HCT116 (cell line): ENCODE measurements at regions of chr2 and their contacts with region 1.

Region 1: DNA sequence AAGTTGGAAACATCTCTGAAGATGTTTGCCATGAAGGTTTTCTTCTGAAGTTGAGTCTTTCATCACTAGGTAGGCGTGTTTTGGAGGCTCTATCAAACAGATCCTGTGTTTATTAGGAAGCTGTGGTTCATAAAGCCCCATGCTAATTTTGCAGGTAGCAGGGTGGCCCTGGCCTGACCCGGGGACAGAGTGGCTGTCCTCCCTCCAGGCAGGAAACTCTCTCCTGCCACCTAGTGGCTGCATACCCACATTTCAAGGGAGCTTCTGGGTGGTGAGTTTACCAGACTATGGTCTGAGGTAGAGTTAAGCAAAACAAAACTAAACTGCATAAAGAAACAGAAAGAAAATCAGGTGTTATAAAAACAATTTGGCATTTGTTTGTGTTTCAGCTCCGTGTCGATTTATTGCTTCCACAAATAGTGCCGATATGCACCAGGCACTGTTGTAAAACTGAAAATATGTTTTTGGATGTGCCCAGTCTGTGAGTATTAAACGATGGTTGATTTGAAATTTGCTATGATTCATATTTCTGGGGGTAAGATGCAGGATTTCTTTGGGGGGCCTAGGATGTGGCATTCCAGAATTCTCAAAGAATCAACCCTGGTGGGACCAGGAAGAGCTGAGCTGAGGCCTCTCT is 26.0 kb upstream of the IL37 start:
- DNase-seq: peak; percentile 40
- ATAC-seq: peak; percentile 91
- H3K4me3 ChIP-seq: no peak overlapping the region
- H3K27ac ChIP-seq: no peak overlapping the region
- H3K4me1 ChIP-seq: peaks cover 3 to 18% of the 10 kb centered on the region in 2 experiments; a peak in 3 of 4 replicates
- H3K27me3 ChIP-seq: no peaks in the 10 kb centered on the region
- CTCF ChIP-seq: peak; percentile 79 to 96 (median 93)
- POLR2A ChIP-seq: no peak
- RAD21 ChIP-seq: peak; percentile 90

Region 2: GRCh38 chr2:112601751-112602150 is 283.2 kb before region 1 on chr2:
- CTCF ChIA-PET with region 1: no interaction called
- POLR2A ChIA-PET with region 1: no interaction called
- RAD21 ChIA-PET with region 1: no interaction called
- intact Hi-C with region 1: loop called (anchors 5 kb)
- DNase-seq: no peak
- ATAC-seq: no peak
- H3K4me3 ChIP-seq: no peak overlapping the region
- H3K27ac ChIP-seq: no peak overlapping the region
- H3K4me1 ChIP-seq: peaks cover 3 to 12% of the 10 kb centered on the region in 2 experiments; a peak in 3 of 4 replicates
- H3K27me3 ChIP-seq: no peaks in the 10 kb centered on the region
- CTCF ChIP-seq: no peak
- POLR2A ChIP-seq: no peak
- RAD21 ChIP-seq: no peak

Region 3: DNA sequence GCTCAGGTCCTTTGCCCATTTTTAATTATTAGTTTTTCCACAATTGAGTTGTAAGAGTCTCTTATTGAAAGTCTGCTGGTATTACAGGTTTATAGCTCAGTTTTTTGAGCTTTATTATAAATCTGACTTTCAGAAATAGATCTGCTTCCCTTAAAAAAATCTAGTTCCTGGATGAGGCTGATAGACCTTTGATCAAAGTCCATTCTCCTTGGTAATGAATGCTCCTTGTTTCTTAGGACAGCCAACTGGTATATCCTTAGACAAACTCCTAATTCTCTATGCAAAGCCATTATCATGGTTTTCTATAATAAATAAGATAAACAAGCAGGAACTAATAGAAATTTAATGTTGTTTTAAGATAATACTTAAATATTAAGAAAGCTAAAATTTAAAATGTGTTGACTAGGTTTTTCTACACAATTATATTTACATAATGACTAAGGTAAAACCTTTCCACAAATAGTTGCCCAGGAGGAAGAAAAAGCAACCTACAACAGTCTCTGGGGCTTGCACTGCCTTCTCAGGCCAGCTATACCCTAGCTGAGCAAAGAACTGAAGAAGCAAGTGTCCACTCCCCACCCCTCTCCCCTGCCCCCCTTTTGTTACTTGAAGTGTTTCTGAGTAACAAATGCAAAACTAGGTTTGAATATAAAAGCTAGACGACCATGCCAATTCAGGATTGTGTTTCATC is 147.3 kb before region 1 on chr2:
- CTCF ChIA-PET with region 1: interaction called, 10 read pairs
- POLR2A ChIA-PET with region 1: no interaction called
- RAD21 ChIA-PET with region 1: no interaction called
- intact Hi-C with region 1: no loop called
- DNase-seq: no peak
- ATAC-seq: no peak
- H3K4me3 ChIP-seq: peak overlapping the region in 1 of 2 experiments; percentile 5; a peak in 1 of 4 replicates
- H3K27ac ChIP-seq: no peak overlapping the region
- H3K4me1 ChIP-seq: peaks cover 15 to 23% of the 10 kb centered on the region in 2 experiments
- H3K27me3 ChIP-seq: no peaks in the 10 kb centered on the region
- CTCF ChIP-seq: no peak
- POLR2A ChIP-seq: no peak
- RAD21 ChIP-seq: no peak

Region 4: GRCh38 chr2:112749755-112750559 is 135.0 kb before region 1 on chr2:
- CTCF ChIA-PET with region 1: interaction called, 50 read pairs
- POLR2A ChIA-PET with region 1: no interaction called
- RAD21 ChIA-PET with region 1: interaction called in 1 of 2 experiments, 5 read pairs
- intact Hi-C with region 1: loop called (anchors 1 kb)
- DNase-seq: no peak
- ATAC-seq: peak; percentile 94
- H3K4me3 ChIP-seq: no peak overlapping the region
- H3K27ac ChIP-seq: no peak overlapping the region
- H3K4me1 ChIP-seq: no peaks in the 10 kb centered on the region
- H3K27me3 ChIP-seq: no peaks in the 10 kb centered on the region
- CTCF ChIP-seq: peak; percentile 83 to 96 (median 92)
- POLR2A ChIP-seq: no peak
- RAD21 ChIP-seq: peak; percentile 81